PC-3 (cell line): ENCODE measurements at regions of chr15 and their contacts with region 1.

Region 1: DNA sequence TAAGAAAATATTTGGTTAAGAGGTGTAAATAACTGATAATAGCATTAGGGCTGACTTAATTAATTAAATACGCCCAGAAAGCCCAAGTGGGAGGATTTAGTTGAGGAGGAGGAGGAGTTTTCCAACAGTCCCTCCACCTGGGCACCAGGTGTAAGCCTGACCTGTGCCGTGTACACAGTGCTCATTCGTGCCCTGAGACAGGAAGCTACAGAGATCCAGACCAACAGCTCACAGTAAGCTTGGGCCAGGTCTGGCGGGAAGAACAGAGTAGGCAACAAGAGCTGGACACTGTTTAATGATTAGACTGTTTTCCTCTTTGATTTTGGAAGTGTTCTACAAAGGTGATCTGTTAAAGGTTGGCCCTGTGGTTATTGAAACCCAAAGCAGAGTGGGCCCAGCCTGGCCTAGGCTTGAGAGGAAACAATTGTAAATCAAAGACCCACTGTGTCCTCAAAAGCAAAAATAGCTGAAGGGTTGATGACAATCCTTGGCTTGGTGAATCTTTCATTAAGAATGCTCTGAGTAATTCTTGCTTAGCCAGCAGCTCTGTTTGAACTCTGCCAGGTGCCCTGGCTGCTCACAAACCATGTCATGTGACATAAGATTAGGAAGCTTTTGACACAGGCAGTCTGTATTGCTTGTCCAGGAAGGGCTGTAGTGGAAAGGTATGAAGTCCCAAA is 13.8 kb downstream of the SQOR start:
- DNase-seq: peak; percentile 88
- ATAC-seq: peak; percentile 66
- H3K4me3 ChIP-seq: no peak overlapping the region
- H3K27ac ChIP-seq: peak overlapping the region; percentile 92
- H3K4me1 ChIP-seq: peaks cover 56% of the 10 kb centered on the region
- H3K27me3 ChIP-seq: no peaks in the 10 kb centered on the region
- CTCF ChIP-seq: no peak

Region 2: GRCh38 chr15:45476410-45476809 is 172.3 kb before region 1 on chr15:
- CTCF ChIA-PET with region 1: no interaction called
- POLR2A ChIA-PET with region 1: no interaction called
- intact Hi-C with region 1: no loop called
- DNase-seq: no peak
- ATAC-seq: no peak
- H3K4me3 ChIP-seq: no peak overlapping the region
- H3K27ac ChIP-seq: no peak overlapping the region
- H3K4me1 ChIP-seq: no peaks in the 10 kb centered on the region
- H3K27me3 ChIP-seq: no peaks in the 10 kb centered on the region
- CTCF ChIP-seq: no peak

Region 3: DNA sequence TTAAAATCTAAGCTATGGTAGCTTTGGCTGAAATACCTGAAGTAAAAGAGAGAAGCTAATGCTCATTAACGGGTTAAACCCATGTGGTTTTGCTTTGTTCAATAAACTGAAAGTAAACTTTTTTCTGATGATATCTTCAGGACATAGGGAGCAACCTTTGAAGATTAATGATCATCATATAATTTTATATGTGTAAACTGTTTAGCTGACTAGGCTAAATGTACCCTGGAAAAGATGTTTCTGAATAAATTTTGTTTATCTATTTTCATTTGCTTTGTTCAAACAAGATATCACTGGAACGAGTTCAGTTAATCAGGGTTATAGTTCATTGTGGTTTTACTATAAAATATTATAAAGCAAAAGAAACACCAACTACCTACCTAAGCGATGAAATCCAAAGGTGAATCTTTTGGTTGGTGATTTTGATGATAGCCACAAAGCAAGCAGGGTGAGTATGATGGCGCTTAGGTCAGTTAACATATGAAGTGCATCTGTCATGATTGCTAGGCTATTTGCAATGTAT is 137.8 kb before region 1 on chr15:
- CTCF ChIA-PET with region 1: no interaction called
- POLR2A ChIA-PET with region 1: interaction called, 17 read pairs
- intact Hi-C with region 1: no loop called
- DNase-seq: no peak
- ATAC-seq: peak; percentile 13; the same call in 1 of the 2 replicates
- H3K4me3 ChIP-seq: no peak overlapping the region
- H3K27ac ChIP-seq: no peak overlapping the region
- H3K4me1 ChIP-seq: no peaks in the 10 kb centered on the region
- H3K27me3 ChIP-seq: no peaks in the 10 kb centered on the region
- CTCF ChIP-seq: no peak